Activated CD8-positive, alpha-beta T cell treated with anti-CD3 and anti-CD28 coated beads, Interleukin-2, amount 10 ng/mL, durations not matched to agents 7 days and 5 days (primary cell): ENCODE measurements at regions of chr9 and their contacts with region 1.

Region 1: GRCh38 chr9:36560857-36561221 is 11.9 kb upstream of the MELK start:
- DNase-seq: no peak
- ATAC-seq: no peak
- H3K4me3 Mint-ChIP-seq: no peak overlapping the region
- H3K27ac Mint-ChIP-seq: no peak overlapping the region
- H3K4me1 Mint-ChIP-seq: peaks cover under 1% of the 10 kb centered on the region
- H3K27me3 Mint-ChIP-seq: peaks cover 4% of the 10 kb centered on the region

Region 2: GRCh38 chr9:36400332-36401163 is 160.3 kb before region 1 on chr9:
- CTCF ChIA-PET with region 1: interaction called, 193 read pairs
- POLR2A ChIA-PET with region 1: no interaction called
- DNase-seq: peak; percentile 91
- ATAC-seq: peak; percentile 80
- H3K4me3 Mint-ChIP-seq: peak overlapping the region; percentile 91
- H3K27ac Mint-ChIP-seq: peak overlapping the region; percentile 95
- H3K4me1 Mint-ChIP-seq: peaks cover 42% of the 10 kb centered on the region
- H3K27me3 Mint-ChIP-seq: no peaks in the 10 kb centered on the region

Region 3: GRCh38 chr9:36441966-36442365 is 118.9 kb before region 1 on chr9:
- CTCF ChIA-PET with region 1: interaction called, 19 read pairs
- POLR2A ChIA-PET with region 1: no interaction called
- DNase-seq: no peak
- ATAC-seq: peak; percentile 47
- H3K4me3 Mint-ChIP-seq: no peak overlapping the region
- H3K27ac Mint-ChIP-seq: peak overlapping the region; percentile 0
- H3K4me1 Mint-ChIP-seq: peaks cover 38% of the 10 kb centered on the region
- H3K27me3 Mint-ChIP-seq: no peaks in the 10 kb centered on the region

Region 4: GRCh38 chr9:36450110-36450732 is 110.6 kb before region 1 on chr9:
- CTCF ChIA-PET with region 1: interaction called, 17 read pairs
- POLR2A ChIA-PET with region 1: no interaction called
- DNase-seq: peak; percentile 35
- ATAC-seq: no peak
- H3K4me3 Mint-ChIP-seq: no peak overlapping the region
- H3K27ac Mint-ChIP-seq: no peak overlapping the region
- H3K4me1 Mint-ChIP-seq: peaks cover 6% of the 10 kb centered on the region
- H3K27me3 Mint-ChIP-seq: no peaks in the 10 kb centered on the region